ENCODE measurements at regions of chr5 and their contacts with region 1.

Region 1: GRCh38 chr5:1332461-1333001 is 12.4 kb downstream of the CLPTM1L start:
- DNase-seq: no peak
- H3K4me3 ChIP-seq: no peak overlapping the region
- H3K4me3 Mint-ChIP-seq: no peak overlapping the region
- H3K27ac Mint-ChIP-seq: no peak overlapping the region
- H3K4me1 ChIP-seq: peaks cover 11% of the 10 kb centered on the region
- H3K4me1 Mint-ChIP-seq: peaks cover 14% of the 10 kb centered on the region
- H3K27me3 ChIP-seq: no peaks in the 10 kb centered on the region
- H3K27me3 Mint-ChIP-seq: peaks cover 1% of the 10 kb centered on the region
- CTCF ChIP-seq: no peak

Region 2: GRCh38 chr5:1315709-1316587 is 16.6 kb before region 1 on chr5:
- CTCF ChIA-PET with region 1: no interaction called
- POLR2A ChIA-PET with region 1: interaction called, 5 read pairs
- intact Hi-C with region 1: loop called (anchors 2 kb)
- DNase-seq: peak; percentile 70 to 77
- H3K4me3 ChIP-seq: peak overlapping the region; percentile 9
- H3K4me3 Mint-ChIP-seq: peak overlapping the region; percentile 39
- H3K27ac Mint-ChIP-seq: peak overlapping the region; percentile 85
- H3K4me1 ChIP-seq: peaks cover 25% of the 10 kb centered on the region
- H3K4me1 Mint-ChIP-seq: peaks cover 16% of the 10 kb centered on the region
- H3K27me3 ChIP-seq: no peaks in the 10 kb centered on the region
- H3K27me3 Mint-ChIP-seq: no peaks in the 10 kb centered on the region
- CTCF ChIP-seq: no peak

Region 3: DNA sequence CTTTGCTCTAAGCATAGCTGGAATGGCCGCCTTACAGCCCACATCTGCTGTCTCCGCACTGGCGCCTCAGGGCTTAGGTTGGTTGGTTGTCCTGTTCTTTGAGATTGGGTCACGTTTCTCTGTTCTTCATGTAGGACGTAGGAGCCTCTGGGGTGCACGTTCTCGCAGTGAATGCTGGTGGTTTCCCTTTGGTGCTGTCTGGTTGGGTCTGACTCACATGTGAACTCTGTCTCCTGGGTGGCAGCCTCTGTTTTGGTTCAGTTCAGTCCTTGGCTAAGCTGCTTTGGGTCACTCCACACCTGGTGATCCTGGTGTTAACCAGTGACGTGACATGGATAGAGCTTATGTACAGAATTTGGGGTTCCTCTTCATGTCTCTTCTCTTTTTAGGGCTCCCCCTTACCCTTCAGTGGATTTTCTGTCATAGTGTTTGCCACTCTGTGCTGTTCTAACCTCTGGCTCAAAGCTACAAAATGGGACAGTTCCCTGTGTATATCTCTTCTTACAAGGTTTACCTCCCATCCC is 203.9 kb after region 1 on chr5:
- CTCF ChIA-PET with region 1: no interaction called
- POLR2A ChIA-PET with region 1: no interaction called
- intact Hi-C with region 1: no loop called
- DNase-seq: no peak
- H3K4me3 ChIP-seq: no peak overlapping the region
- H3K4me3 Mint-ChIP-seq: no peak overlapping the region
- H3K27ac Mint-ChIP-seq: no peak overlapping the region
- H3K4me1 ChIP-seq: no peaks in the 10 kb centered on the region
- H3K4me1 Mint-ChIP-seq: no peaks in the 10 kb centered on the region
- H3K27me3 ChIP-seq: no peaks in the 10 kb centered on the region
- H3K27me3 Mint-ChIP-seq: peaks cover 19% of the 10 kb centered on the region
- CTCF ChIP-seq: no peak